ENCODE measurements at regions of chr13 and their contacts with region 1.

Region 1: DNA sequence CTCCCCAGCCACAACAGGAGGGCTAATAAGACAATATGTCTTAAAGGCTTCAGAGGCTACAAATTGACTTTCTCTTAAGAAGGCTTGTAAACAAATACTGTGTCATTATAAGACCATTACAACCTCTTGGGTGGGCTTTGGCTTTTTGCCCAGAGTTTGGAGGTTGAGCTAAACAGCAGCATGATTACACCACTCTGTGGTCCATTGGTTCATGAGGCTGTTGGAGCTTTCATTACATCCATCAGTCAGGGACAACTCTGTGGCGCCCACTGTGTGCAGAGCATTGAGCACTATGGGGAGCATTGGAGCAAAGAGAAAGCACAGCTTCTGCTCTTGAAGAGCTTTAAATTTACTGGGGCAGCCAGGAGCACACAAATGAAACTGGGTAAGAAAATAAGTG is 75.9 kb downstream of the TNFSF11 start:
- DNase-seq: no peak
- CTCF ChIP-seq: no peak

Region 2: GRCh38 chr13:42875475-42876269 is 225.8 kb after region 1 on chr13:
- in situ Hi-C with region 1: no loop called
- DNase-seq: no peak
- CTCF ChIP-seq: no peak

Region 3: DNA sequence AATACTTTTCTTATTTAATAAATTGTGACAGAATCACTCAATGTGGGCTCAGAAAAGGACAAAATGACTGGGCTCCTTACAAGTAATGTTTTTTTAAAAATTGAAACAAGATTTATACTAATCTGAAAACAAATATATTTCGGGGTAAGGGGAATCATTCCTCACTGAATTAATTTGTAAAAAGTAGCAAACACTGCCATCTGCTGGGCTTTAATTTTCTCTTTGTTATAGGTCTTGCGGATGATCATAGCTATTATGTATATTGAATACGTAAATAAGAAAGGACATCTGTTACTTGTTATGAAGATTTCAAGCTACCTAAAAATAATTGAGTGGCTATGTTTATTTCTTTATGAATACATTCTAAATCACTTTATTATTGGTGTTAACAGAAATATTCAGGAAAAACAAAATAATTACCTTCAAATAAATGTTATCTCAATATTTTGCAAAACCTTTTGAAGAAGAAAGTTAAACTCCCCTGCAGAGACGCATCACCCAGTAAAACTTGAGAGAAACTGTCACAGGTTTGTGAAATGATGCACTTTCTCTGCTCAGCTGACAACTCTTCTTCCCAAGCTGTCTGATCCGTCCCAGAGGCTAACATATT is 1154.7 kb after region 1 on chr13:
- in situ Hi-C with region 1: loop called (anchors 25 kb)
- DNase-seq: peak; percentile 51
- CTCF ChIP-seq: no peak